Right lobe of liver (tissue), 6 donors: ENCODE measurements at regions of chr7 and their contacts with region 1.

Region 1: DNA sequence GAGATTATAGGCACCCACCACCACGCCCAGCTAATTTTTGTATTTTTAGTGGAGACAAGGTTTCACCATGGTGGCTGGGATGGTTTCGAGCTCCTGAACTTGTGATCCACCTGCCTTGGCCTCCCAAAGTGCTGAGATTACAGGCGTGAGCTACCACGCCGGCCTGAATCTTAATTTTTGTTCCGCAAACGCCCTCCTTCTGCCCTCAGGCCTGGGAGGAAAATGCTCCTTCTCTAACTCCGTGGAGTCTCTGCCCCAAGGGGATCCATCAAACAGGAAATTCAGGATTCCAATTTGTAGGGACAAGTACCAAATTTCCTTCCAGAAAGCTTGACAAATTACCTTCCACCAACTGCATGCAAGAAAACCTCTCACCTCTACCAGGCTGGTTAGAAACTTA is 43.2 kb downstream of the RBAK start:
- DNase-seq: peak in 1 of 3 donors; percentile 2
- ATAC-seq: no peak
- H3K4me3 ChIP-seq: no peak overlapping the region
- H3K27ac ChIP-seq: no peak overlapping the region
- H3K4me1 ChIP-seq: no peaks in the 10 kb centered on the region
- H3K27me3 ChIP-seq: no peaks in the 10 kb centered on the region
- CTCF ChIP-seq: no peak
- POLR2A ChIP-seq: no peak

Region 2: DNA sequence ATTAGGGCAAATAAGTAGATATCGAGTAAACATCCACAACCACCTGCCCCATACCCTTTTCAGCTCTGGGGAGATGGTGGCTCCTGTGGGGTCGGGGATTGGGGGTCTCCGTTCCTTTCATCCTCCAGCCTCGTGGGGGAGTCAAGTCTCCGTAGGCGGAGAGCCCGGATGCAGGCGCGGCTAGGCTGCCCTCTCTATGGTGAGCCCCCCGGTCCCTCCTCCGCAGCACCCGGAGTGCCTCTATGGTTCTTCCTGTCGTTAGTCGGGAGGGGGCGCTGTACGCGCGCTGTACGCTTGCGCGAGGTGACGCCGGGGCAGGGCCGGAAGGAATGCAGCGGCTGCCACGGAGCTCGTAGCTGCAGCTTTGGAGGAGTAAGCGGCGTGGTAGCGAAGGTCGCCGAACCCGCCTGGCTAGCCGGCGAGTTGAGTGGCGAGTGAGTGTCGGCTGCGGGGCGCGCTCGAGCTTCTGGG is 115.1 kb before region 1 on chr7:
- intact Hi-C with region 1: loop called in 1 of 2 experiments (anchors 5 kb)
- DNase-seq: peak; percentile 92 to 93 (median 93)
- ATAC-seq: peak; percentile 98 to 99 (median 98)
- H3K4me3 ChIP-seq: peak overlapping the region; percentile 71 to 79 (median 75)
- H3K27ac ChIP-seq: peak overlapping the region; percentile 64 to 67 (median 65)
- H3K4me1 ChIP-seq: peaks cover 0 to 9% (median 0%) of the 10 kb centered on the region in 4 donors
- H3K27me3 ChIP-seq: no peaks in the 10 kb centered on the region
- CTCF ChIP-seq: peak; percentile 70 to 86 (median 82)
- POLR2A ChIP-seq: peak; percentile 41

Region 3: DNA sequence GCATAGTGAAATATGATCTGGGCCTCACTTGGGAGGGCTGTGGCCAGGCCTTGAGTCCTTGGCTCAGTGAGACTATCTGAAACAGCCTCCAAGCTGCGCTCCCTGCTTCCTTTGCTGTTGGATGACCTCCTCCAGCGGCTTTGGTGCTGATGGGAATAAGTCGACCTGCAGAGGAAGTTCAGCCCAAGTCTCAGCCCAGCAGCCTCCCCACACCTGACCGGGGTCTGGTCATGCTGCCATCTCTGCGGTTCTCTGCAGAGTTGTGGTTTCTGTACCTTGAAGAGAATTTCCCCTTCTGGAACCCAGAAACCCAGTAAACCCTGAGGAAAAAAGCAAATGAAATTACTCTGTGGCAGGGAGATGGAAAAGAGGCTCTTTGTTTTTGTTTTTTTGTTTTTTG is 47.9 kb before region 1 on chr7:
- intact Hi-C with region 1: no loop called
- DNase-seq: no peak
- ATAC-seq: no peak
- H3K4me3 ChIP-seq: no peak overlapping the region
- H3K27ac ChIP-seq: no peak overlapping the region
- H3K4me1 ChIP-seq: no peaks in the 10 kb centered on the region
- H3K27me3 ChIP-seq: no peaks in the 10 kb centered on the region
- CTCF ChIP-seq: no peak
- POLR2A ChIP-seq: no peak

Region 4: DNA sequence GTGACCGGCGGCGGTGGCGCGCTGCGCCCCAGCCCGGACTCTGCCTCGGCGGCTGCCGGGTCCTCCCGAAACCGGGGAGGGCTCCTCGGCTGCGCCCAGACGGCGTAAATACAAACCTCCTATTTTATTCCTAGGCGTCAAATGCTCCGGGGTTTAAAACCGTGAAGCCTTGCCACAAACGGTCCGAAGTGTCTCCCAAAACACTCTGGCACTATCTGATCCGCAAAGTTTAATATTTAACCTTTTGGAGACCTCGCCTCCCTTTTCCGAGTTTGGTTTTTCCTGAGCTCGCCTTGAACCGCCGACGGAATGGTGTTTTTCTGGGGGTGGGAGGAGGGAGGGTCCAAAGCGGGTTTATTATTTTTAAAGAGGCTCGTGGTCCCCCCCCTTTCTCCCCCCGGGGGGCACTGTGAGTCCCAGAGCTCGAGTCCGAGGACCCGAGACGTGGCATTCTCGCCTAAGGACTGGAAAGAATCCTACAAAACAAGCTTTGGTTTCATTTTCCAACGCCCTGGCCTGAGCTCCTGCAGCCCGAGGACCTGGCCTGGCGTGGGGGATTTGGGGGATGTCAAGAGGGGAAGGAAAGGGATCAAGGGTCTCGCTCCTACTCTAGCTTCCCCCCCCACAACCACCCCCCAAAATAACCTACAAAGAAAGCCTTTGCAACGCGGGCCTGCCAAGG is 332.9 kb after region 1 on chr7:
- intact Hi-C with region 1: no loop called
- DNase-seq: peak; percentile 67 to 85 (median 78)
- ATAC-seq: peak; percentile 0 to 4 (median 2)
- H3K4me3 ChIP-seq: peak overlapping the region; percentile 83 to 87 (median 83)
- H3K27ac ChIP-seq: peak overlapping the region; percentile 98 to 99 (median 99)
- H3K4me1 ChIP-seq: peaks cover 0 to 21% (median 9%) of the 10 kb centered on the region in 4 donors
- H3K27me3 ChIP-seq: no peaks in the 10 kb centered on the region
- CTCF ChIP-seq: no peak
- POLR2A ChIP-seq: peak; percentile 32